PC-9 (cell line): ENCODE measurements at regions of chr10 and their contacts with region 1.

Region 1: GRCh38 chr10:61903221-61903927 is 1.9 kb downstream of the ARID5B start:
- DNase-seq: peak; percentile 42 to 51
- H3K4me3 ChIP-seq: peak overlapping the region; percentile 76
- H3K27ac ChIP-seq: peak overlapping the region; percentile 43
- H3K4me1 ChIP-seq: peaks cover 31% of the 10 kb centered on the region
- H3K27me3 ChIP-seq: no peaks in the 10 kb centered on the region
- CTCF ChIP-seq: no peak

Region 2: DNA sequence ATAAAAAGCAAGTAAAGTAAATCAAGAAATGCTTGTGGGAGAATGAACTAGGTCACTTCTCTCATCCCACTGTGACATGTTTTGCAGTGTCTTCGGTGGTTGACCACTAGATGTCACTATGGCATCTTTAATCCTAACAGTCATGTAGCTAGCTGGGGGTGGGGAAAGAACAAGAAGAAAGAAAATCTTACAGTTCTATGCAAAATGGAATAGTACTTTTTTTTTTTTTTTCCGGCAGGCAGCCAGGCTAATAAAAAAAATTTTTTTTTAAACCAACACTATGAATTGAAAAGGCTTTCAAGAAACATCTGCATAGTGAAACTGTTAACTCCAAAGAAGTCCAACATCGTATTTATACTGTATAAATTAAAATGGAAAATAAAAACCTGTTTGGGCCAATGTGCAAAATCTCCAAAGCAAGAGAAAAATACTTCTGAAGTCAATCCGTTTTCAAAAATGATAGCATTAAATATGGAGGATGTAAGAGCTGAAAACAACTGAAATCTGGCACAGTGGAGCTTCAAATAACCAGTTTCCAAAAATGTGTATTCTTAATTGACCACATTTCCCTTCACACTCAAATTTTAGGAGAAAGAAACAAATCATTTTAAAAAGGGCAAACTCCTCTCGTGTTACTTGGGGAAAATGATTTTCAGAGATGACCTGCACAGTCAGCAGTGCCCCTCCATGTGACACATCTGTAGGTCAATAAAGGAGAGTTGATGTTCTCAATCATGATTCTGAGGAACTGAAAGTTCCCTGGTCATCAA is 1086.6 kb before region 1 on chr10:
- CTCF ChIA-PET with region 1: no interaction called
- POLR2A ChIA-PET with region 1: no interaction called
- intact Hi-C with region 1: loop called (anchors 5 kb)
- DNase-seq: peak; percentile 33 to 59
- H3K4me3 ChIP-seq: no peak overlapping the region
- H3K27ac ChIP-seq: no peak overlapping the region
- H3K4me1 ChIP-seq: peaks cover 5% of the 10 kb centered on the region; the same call in 1 of the 2 replicates
- H3K27me3 ChIP-seq: no peaks in the 10 kb centered on the region
- CTCF ChIP-seq: peak; percentile 95

Region 3: DNA sequence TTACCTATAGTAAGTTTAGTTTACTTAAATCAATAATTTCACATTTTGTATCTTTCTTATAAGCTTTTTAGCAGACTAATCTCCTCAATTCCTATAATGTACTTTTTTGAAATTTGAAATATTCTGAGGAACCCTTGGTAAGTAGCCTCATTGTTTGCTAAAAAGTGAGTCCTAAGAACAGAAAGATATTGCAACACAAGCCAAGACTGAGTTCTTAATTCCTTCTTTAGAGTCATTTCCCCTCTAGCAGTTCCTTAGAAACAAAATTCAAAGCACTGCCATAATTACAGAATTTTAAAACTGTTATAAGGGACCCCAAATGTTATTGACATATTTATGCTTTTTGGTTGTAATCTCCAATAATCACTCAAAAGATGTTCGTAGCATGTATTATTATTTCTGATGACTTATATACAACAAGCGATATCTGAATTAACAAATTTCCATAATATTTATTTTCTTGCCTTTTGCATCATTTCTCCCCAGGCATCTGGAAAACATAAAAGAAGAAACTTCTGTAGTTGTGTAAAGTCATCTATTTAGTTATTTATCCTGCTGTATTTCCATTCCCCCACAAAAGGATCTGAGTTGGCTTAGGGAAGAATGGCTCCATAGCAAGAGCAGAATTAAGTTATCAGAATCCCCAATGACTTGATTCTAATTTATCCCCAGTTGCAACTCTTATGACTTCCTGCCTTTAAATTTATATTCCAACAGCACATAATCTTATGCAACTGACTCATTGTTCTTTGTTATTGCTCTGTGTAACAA is 518.0 kb before region 1 on chr10:
- CTCF ChIA-PET with region 1: no interaction called
- POLR2A ChIA-PET with region 1: no interaction called
- intact Hi-C with region 1: no loop called
- DNase-seq: no peak
- H3K4me3 ChIP-seq: no peak overlapping the region
- H3K27ac ChIP-seq: no peak overlapping the region
- H3K4me1 ChIP-seq: no peaks in the 10 kb centered on the region
- H3K27me3 ChIP-seq: no peaks in the 10 kb centered on the region
- CTCF ChIP-seq: no peak

Region 4: GRCh38 chr10:61397175-61397986 is 506.0 kb before region 1 on chr10:
- CTCF ChIA-PET with region 1: interaction called, 14 read pairs
- POLR2A ChIA-PET with region 1: no interaction called
- intact Hi-C with region 1: no loop called
- DNase-seq: no peak
- H3K4me3 ChIP-seq: peak overlapping the region; percentile 5; the same call in 1 of the 2 replicates
- H3K27ac ChIP-seq: no peak overlapping the region
- H3K4me1 ChIP-seq: no peaks in the 10 kb centered on the region
- H3K27me3 ChIP-seq: no peaks in the 10 kb centered on the region
- CTCF ChIP-seq: no peak

Region 5: GRCh38 chr10:61733358-61733940 is 169.9 kb before region 1 on chr10:
- CTCF ChIA-PET with region 1: no interaction called
- POLR2A ChIA-PET with region 1: no interaction called
- intact Hi-C with region 1: loop called (anchors 5 kb)
- DNase-seq: peak in 1 of 2 experiments; percentile 9
- H3K4me3 ChIP-seq: no peak overlapping the region
- H3K27ac ChIP-seq: no peak overlapping the region
- H3K4me1 ChIP-seq: no peaks in the 10 kb centered on the region
- H3K27me3 ChIP-seq: no peaks in the 10 kb centered on the region
- CTCF ChIP-seq: peak; percentile 79

Region 6: DNA sequence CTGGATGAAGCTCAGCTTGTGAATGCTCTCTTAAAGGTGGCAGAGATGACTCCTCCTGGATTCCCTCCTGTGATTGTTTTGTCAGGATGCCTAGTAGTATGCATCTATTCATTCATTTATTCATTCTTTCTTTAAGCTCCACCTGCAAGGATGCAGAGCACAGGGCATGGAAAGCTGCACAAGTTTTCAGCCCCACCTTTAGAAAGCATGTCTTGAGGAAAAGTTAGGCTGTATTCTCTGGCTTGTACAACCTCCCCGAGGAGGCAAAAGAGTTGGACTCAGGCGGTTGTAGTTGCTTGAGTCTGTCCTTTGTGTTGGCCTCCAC is 20.5 kb after region 1 on chr10:
- CTCF ChIA-PET with region 1: no interaction called
- POLR2A ChIA-PET with region 1: no interaction called
- intact Hi-C with region 1: no loop called
- DNase-seq: no peak
- H3K4me3 ChIP-seq: no peak overlapping the region
- H3K27ac ChIP-seq: no peak overlapping the region
- H3K4me1 ChIP-seq: no peaks in the 10 kb centered on the region
- H3K27me3 ChIP-seq: no peaks in the 10 kb centered on the region
- CTCF ChIP-seq: no peak

Region 7: DNA sequence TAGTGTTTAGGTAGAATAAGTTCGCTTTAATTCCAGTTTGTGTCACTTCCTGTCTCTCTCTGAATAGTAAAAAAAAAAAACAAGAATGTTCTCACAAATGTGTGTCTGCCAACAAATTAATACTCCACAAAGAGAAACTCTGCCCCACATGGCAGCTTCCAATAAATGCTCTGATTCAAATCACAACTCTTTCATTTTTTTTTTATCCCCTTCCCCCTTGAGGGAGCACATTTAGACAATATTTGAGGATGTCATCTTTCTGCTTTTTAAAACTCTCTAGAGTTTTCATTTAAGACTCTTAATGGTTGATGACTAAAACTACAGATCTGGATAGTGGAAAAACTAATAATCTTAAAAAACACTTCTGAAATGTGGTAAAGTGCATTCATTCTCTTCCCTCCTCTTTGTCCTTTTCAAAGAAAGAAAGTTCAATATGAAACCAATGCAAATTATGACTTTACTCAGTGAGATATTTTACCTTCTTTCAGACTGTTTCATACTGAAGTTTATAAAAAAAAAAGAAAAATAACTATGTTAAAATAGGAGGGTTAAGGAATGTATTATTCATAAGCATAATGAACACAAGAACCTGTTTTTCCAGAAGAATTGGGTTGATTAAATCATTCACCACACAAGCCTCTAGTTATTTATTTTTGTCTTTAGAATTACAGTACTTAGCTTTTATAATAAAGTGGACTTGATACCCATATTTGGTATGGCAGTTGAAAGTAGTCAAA is 40.5 kb after region 1 on chr10:
- CTCF ChIA-PET with region 1: no interaction called
- POLR2A ChIA-PET with region 1: no interaction called
- intact Hi-C with region 1: loop called (anchors 1 kb)
- DNase-seq: peak; percentile 7 to 88
- H3K4me3 ChIP-seq: peak overlapping the region; percentile 37; the same call in 1 of the 2 replicates
- H3K27ac ChIP-seq: peak overlapping the region; percentile 83
- H3K4me1 ChIP-seq: peaks cover 53% of the 10 kb centered on the region
- H3K27me3 ChIP-seq: no peaks in the 10 kb centered on the region
- CTCF ChIP-seq: no peak

Region 8: DNA sequence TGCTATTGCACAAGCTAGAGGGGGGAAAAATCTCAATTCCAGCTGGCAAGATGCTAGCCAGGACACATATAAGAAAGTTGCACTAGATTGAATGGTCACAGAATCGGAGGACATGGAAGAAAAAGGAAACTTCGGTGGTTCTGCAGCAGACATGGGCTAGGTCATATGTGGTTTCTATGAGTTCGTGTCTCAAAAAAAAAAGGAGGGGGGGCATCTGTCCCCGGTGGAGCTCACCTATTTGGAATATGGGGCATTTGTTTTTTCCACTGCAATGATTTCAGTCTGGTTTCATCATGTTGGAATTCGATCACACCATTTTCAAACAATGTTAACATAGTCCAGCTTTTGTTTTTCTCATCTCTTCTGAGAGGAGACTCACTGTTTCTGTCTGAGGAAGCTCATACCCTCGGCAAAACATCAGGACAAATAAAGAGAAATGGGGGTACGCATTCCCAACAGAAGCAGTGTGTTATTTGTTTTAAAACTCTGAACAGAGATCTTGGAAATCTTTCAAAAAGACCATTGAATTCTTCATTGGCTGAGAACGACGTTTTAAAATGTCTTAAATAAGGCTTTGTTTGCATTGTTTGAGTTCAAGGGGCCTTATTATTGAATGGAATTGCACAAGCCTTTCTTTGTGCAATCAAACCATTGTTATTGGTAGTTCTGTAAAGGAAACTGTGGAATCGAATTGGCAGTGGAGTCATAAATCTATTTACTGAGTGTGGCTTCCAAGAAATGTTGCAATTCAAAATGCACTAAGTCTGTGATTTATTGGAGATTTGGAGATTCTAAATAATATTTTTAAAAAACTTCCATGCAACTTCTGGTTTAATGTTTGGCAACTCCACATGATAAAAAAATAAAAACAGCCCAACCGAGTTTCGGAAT is 192.1 kb after region 1 on chr10:
- CTCF ChIA-PET with region 1: no interaction called
- POLR2A ChIA-PET with region 1: interaction called, 3 read pairs
- intact Hi-C with region 1: loop called (anchors 5 kb)
- DNase-seq: peak in 1 of 2 experiments; percentile 56
- H3K4me3 ChIP-seq: 0 out of 2 replicates have a peak overlapping the region, but pooled peaks have one; percentile 1
- H3K27ac ChIP-seq: peak overlapping the region; percentile 62
- H3K4me1 ChIP-seq: peaks cover 53% of the 10 kb centered on the region
- H3K27me3 ChIP-seq: no peaks in the 10 kb centered on the region
- CTCF ChIP-seq: no peak

Region 9: DNA sequence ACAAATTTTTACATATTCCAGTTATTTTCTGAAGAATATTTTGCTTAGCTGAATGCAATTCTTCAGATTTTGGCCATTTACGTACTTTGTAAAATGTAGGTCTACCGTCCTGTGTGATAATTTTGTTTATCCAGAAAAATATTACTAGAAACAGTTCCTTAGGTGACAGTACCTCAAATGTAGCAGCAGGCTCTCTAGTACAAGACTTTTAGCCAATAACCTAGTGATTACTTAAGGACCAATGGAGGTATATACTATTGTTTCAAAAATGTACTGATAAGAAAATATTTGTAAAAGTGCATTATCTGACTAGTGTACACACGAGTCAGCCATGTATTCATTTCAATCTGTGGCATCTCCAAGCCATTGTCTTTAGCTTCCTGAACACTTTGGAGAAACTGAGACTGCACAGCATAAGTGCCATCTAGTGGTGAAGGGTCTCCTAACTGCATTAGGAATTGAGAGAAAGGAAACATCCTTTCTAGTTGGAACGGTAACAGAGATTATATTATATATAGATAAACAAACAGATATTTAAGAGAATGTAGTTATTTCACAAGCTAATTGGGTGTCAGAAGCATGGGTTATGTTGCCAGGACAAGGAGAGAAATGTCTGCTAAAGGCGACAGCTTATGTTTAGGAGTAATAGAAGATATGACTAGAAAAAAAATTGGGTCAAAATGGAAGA is 341.6 kb after region 1 on chr10:
- CTCF ChIA-PET with region 1: interaction called, 5 read pairs
- POLR2A ChIA-PET with region 1: no interaction called
- intact Hi-C with region 1: loop called (anchors 2 kb)
- DNase-seq: peak; percentile 37 to 58
- H3K4me3 ChIP-seq: no peak overlapping the region
- H3K27ac ChIP-seq: no peak overlapping the region
- H3K4me1 ChIP-seq: peaks cover 35% of the 10 kb centered on the region
- H3K27me3 ChIP-seq: no peaks in the 10 kb centered on the region
- CTCF ChIP-seq: peak; percentile 88